HEK293T (cell line): ENCODE measurements at regions of chr3 and their contacts with region 1.

Region 1: GRCh38 chr3:50298836-50299637 is at the starts of genes HYAL3 and NAA80:
- DNase-seq: peak; percentile 98

Region 2: GRCh38 chr3:50321336-50322114 is 22.5 kb after region 1 on chr3:
- CTCF ChIA-PET with region 1: interaction called, 4 read pairs
- POLR2A ChIA-PET with region 1: interaction called, 11 read pairs
- DNase-seq: peak; percentile 88

Region 3: DNA sequence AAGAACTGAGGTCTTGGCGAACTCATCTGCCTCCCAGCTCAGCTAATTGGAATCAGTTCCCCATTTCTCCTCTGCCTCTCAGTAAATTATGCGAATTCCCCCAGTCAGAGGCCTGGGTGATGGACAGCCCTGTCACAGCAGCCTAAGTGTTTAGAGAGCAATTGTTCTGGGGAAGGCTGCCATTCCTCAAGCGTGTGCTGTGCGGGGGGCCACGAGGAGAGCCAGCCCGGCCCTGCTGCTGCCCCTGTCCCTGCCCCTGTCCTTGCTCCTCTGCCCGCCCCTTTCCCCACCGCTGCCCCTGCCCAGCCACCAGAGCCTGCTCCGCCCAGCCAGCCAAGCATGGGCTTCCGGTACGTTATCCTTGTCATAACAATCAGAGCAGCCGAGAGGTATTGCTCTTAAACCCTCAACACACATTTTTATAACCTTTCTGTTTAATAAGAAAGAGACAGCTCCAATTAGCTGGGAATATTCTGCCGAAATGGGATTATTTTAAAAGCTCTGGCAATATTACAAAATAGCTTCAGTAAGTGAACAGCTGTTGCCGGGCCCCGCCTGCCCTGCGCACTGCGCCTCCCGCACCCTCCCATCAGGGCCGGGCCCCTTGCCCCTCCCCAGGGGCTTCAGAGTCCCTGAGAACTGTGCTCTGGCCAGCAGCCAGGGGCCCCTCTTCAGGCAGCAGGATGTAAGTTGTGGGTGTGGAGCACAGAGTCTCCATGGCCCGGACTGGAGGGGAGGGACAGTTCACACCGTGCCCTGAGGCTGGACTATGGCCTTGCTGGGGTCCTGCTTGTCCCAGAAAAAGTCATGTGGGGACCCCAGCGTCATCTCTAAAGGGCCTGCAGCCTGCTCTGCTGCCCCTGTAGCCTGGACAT is 216.8 kb after region 1 on chr3:
- CTCF ChIA-PET with region 1: no interaction called
- POLR2A ChIA-PET with region 1: no interaction called
- DNase-seq: peak; percentile 45